Right ventricle myocardium inferior (tissue), 1 donor: ENCODE measurements at regions of chr19 and their contacts with region 1.

Region 1: DNA sequence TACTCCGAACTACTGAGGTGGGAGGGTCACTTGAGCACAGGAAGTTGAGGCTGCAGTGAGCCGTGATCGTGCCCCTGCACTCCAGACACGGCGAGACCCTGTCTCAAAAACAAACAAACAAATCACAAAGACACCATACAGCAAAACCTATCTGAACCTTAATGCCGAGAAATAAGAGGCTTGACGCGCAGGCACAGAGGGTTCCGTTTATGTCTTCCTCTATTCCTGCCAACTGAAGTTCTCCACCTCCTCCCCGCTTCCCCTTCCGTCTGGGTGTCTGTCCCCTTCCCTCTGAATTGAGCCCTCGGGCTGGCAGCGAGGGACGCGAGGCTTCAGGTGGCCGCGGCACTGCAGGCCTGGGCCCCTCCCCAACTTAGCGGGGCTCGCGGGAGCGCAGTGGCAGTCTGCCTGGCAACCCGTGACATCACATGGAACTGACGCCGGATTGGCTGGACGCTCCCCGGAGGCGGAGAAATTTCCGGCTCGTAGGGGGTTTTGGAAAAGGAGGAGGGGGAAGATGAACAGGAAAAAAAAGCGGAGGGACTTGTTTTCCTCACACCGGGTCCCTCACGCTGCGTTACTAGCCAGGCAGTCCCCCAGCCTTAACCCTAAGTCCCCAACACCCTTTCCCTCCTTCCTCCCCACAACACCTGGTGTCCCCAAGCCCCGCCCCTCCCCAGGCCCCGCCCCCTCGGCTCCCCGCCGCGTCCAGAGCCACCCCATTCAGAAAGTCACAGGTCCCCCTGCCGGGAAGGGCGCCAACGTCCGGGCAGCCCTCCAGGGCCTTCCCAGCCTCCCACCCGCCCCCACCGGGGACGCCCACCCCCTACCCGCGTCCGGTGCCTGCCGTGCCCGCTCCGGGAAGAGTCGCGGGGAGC is 1.1 kb upstream of the MYBPC2 start:
- DNase-seq: peak; percentile 92
- ATAC-seq: peak; percentile 90

Region 2: DNA sequence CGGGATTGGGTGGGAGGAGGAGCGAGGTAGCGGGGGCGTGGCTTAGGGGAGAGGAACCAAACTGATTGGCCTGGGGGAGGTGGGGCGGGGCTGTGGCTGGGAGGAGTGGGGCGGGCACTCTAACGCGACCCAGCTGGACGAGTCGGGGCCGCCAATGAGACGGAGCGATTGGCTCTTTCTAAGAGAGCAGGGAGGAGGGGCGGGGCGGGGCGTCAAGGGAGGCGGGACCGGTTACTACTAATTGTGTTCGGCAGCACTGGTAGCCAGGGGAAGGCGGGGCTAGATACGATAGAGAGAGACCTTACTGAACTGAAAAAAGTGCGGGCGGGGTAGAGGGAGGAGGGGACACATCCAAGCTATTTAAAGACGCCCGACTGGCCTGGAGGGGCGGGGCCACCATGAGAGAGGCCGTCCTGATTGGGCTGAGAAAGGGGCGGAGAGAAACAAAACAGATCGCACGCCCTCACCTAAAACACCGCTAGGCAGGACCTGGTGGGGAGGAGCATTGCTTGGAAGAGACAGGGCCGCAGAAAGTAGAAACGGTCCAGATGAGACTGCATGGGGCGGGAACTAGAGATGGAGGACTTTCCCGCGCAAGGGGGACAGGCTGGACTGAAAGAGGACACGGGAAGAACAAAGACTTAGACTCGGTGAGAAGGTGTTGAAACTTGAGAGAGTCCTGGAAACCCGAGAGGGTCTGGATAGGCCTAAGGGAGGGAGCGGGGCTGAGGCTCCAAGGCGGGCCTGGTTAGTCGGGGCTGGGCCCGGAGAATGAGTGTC is 102.2 kb before region 1 on chr19 and contains the start of gene KCNC3:
- intact Hi-C with region 1: no loop called
- DNase-seq: peak; percentile 99
- ATAC-seq: peak; percentile 87
- total RNA-seq, gene KCNC3: 1.7 TPM

Region 3: DNA sequence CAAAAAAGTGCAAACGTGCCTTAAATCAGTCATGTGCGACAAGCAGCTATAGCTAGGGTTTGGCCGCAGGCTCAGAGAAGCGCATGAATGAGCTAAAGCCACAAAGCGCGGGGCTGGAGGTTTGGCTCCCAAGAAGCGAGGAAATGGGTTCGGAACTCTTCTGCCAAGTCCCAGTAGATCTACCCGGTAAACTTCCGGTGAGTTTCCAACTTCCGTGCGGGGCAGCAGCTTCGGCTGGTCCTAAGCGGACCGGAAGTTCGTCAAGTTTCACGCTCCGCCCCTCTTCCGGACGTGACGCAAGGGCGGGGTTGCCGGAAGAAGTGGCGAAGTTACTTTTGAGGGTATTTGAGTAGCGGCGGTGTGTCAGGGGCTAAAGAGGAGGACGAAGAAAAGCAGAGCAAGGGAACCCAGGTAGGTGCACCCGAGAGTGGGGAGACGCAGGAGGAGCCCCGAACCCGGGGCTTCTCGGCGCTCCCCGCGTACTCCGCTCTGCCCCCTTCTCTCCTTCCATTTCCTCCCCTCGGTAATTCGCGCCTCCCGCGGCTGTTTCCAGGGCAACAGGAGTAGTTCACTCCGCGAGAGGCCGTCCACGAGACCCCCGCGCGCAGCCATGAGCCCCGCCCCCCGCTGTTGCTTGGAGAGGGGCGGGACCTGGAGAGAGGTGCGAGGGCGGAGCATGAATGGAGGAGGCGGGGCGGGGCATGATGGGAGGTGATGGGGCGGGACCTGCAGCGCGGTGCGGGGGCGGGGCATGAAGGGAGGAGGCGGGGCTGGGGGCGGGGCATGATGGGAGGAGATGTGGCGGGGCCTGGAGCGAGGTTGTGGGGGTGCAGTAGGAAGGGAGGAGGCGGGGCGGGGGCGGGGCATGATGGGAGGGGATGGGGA is 55.2 kb before region 1 on chr19 and contains the start of gene NR1H2:
- intact Hi-C with region 1: loop called (anchors 5 kb)
- DNase-seq: peak; percentile 95
- ATAC-seq: peak; percentile 96
- total RNA-seq, gene NR1H2: 69.5 TPM